ENCODE measurements at regions of chr1 and their contacts with region 1.

Region 1: GRCh38 chr1:85259118-85259911 is at the start of gene C1orf52:
- DNase-seq: peak; percentile 96
- ATAC-seq: peak; percentile 96
- H3K4me3 Mint-ChIP-seq: peak within 1 kb of the TSS; percentile 96
- H3K27ac Mint-ChIP-seq: peak within 1 kb of the TSS; percentile 95
- H3K4me1 Mint-ChIP-seq: peaks cover 30% of the 10 kb centered on the region
- H3K27me3 Mint-ChIP-seq: no peaks in the 10 kb centered on the region
- total RNA-seq, gene C1orf52: 23.5 to 28.7 TPM

Region 2: DNA sequence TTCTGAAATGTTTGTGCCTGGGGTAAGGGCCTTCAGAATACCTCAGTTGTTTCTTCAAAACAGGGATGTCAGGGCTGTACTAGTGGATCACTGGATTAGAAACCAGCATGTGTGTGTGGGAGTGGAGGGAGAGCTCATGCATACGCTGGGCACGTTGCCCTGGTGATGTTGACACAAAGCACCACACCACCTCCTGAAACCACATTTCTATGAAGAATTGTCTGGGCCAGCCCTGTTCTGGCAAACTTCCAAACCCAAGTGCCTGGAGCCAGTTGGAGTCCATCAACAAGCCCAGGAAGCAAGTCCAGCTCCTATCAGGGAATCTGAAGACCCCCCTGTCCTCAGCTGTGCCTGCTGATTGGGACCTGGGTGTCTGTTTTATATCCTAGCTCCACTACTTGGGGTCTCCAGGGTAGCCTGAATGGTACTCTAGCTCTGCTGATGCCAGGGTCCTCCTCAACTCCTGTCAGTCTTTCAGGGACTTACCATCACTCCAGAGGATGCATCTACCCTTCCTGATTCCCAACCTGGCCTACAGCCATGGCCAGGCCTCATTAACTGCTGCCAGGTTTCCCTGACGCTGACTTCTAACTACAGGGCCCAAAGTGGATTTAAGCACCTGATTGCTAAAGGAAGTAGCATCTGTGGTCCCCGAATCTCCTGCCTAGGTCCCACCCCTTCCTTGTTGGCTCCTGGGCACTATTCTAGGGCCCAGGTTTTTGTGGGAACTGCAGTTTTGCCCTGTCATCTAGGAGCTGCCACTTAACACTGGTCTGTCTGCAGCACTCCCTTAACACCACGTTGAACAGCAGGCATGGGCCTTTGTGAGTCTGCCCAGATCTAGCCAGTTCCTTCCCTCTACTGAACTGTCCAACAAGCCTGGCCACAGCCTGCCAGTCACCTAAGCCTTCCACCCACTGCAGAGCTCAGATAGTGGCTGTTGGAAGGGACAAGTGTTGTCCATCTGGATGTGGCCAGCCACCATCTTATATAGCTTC is 411.8 kb before region 1 on chr1:
- CTCF ChIA-PET with region 1: no interaction called
- DNase-seq: no peak
- ATAC-seq: no peak
- H3K4me3 Mint-ChIP-seq: no peak overlapping the region
- H3K27ac Mint-ChIP-seq: no peak overlapping the region
- H3K4me1 Mint-ChIP-seq: peaks cover 1% of the 10 kb centered on the region
- H3K27me3 Mint-ChIP-seq: peaks cover 10% of the 10 kb centered on the region

Region 3: DNA sequence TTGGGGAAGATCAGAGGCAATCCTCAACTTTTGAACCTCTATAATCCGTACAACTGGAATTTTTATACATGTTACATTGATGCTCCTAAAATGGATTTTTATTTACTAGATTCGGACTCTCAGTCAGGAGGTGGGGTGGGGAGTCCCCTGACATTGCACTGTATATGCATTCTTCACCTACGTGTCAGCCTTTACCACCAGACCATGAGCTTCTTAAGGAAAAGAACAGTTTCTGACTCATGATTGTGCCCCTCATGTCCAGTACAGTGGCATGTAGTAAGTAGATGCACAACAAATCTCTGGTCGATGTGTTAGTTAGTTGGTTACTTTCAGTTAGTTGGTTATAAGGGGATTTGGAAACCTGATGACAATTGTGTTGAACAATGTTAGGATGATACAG is 381.7 kb before region 1 on chr1:
- CTCF ChIA-PET with region 1: no interaction called
- DNase-seq: no peak
- ATAC-seq: no peak
- H3K4me3 Mint-ChIP-seq: no peak overlapping the region
- H3K27ac Mint-ChIP-seq: no peak overlapping the region
- H3K4me1 Mint-ChIP-seq: peaks cover 21% of the 10 kb centered on the region
- H3K27me3 Mint-ChIP-seq: peaks cover 40% of the 10 kb centered on the region

Region 4: DNA sequence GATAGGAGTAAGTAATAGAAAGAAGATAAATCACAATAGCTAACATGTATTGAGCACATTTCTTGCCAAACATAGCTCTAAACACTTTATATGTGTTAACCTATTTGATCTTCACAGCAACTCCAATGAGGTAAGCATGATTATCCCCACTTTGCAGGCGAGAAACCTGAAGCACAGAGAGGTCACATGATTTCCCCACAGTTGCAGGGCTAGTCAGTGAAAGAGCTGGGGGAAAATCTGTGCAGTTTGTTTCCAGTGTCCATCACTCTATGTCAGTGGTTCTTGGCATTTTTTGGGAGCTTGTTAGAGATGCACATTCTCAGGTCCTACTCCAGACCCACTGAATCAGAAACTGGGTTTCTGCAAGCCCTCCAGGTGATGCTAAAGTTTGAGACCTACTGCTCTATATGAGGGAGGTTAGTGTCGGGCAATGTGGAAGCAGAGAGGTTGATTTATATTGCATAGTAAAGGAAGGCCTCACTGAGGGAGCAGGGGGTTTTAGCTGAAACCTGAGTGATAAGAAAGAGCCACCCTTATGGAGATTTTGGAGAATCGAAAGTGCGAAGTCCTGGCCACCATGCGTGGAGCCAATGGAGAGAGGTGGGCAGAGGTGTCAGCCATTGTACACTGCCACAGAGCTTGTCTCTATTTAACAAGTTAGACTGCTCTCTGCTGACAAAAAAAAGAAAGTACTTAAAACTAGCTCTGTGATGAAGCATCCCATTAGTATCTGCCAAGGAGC is 231.9 kb before region 1 on chr1:
- CTCF ChIA-PET with region 1: interaction called, 11 read pairs
- DNase-seq: peak; percentile 54
- ATAC-seq: peak; percentile 90
- H3K4me3 Mint-ChIP-seq: peak overlapping the region; percentile 37
- H3K27ac Mint-ChIP-seq: peak overlapping the region; percentile 47
- H3K4me1 Mint-ChIP-seq: peaks cover 11% of the 10 kb centered on the region
- H3K27me3 Mint-ChIP-seq: no peaks in the 10 kb centered on the region

Region 5: DNA sequence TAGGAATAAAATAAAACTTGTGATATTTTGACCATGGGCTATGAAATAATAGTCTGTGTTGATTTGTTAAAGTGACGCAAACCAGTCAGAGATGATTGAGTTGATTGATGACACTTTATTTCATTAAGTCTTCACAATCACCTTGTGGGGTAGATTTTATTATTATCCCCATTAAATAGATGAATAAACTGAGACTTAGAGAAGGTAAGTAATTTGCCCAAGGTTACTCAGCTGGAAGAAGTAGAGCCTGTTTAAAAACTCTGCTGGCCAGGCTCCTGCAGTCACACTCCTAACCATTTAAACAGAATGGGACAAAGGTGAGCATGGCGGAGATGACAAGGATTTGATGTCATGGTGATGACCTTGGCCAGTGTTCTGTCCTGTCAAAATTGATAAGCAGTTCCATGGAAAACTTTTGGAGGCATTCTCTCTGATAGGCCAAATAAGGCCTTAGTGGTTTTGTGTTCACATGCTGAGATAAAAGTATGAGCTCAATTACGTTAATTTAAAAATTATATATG is 188.3 kb before region 1 on chr1:
- CTCF ChIA-PET with region 1: no interaction called
- DNase-seq: no peak
- ATAC-seq: no peak
- H3K4me3 Mint-ChIP-seq: no peak overlapping the region
- H3K27ac Mint-ChIP-seq: no peak overlapping the region
- H3K4me1 Mint-ChIP-seq: peaks cover 5% of the 10 kb centered on the region
- H3K27me3 Mint-ChIP-seq: no peaks in the 10 kb centered on the region

Region 6: DNA sequence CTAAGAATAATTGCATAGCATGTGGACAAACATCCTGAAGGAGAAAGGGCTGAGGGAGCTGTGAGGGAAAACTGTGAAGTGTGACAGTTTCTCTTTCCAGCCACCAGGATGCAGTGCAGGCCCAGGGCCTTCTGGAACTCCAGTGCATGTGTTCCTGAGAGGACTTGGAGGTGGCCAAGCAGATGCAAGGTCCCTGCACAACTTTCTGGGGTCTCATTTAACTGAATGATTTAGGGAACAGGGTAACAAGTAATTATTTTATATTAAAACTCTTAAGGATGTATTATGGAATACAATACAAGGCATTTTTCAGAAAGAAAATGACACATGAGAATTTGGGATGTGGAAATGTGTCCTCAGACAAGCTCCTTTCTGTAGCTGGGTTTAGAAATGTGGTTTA is 149.8 kb before region 1 on chr1:
- CTCF ChIA-PET with region 1: interaction called, 29 read pairs
- DNase-seq: peak; percentile 58
- ATAC-seq: peak; percentile 82
- H3K4me3 Mint-ChIP-seq: no peak overlapping the region
- H3K27ac Mint-ChIP-seq: no peak overlapping the region
- H3K4me1 Mint-ChIP-seq: no peaks in the 10 kb centered on the region
- H3K27me3 Mint-ChIP-seq: peaks cover 2% of the 10 kb centered on the region

Region 7: GRCh38 chr1:85240174-85240601 is 19.1 kb before region 1 on chr1:
- CTCF ChIA-PET with region 1: interaction called, 15 read pairs
- DNase-seq: peak; percentile 48
- ATAC-seq: peak; percentile 84
- H3K4me3 Mint-ChIP-seq: no peak overlapping the region
- H3K27ac Mint-ChIP-seq: no peak overlapping the region
- H3K4me1 Mint-ChIP-seq: peaks cover 14% of the 10 kb centered on the region
- H3K27me3 Mint-ChIP-seq: peaks cover 3% of the 10 kb centered on the region

Region 8: GRCh38 chr1:85494904-85495266 is 235.6 kb after region 1 on chr1:
- CTCF ChIA-PET with region 1: no interaction called
- DNase-seq: no peak
- ATAC-seq: no peak
- H3K4me3 Mint-ChIP-seq: no peak overlapping the region
- H3K27ac Mint-ChIP-seq: no peak overlapping the region
- H3K4me1 Mint-ChIP-seq: no peaks in the 10 kb centered on the region
- H3K27me3 Mint-ChIP-seq: peaks cover 14% of the 10 kb centered on the region

Measured in activated CD8-positive, alpha-beta memory T cell treated with anti-CD3 and anti-CD28 coated beads, Interleukin-2, amount 10 ng/mL, durations not matched to agents 7 days and 5 days (primary cell).